ENCODE measurements at regions of chr17 and their contacts with region 1.

Region 1: GRCh38 chr17:46995841-46996571 is 17.0 kb upstream of the RPRML start:
- DNase-seq: no peak
- ATAC-seq: no peak

Region 2: GRCh38 chr17:46841561-46842379 is 154.2 kb before region 1 on chr17:
- intact Hi-C with region 1: loop called (anchors 1 kb)
- DNase-seq: no peak
- ATAC-seq: peak; percentile 46

Region 3: DNA sequence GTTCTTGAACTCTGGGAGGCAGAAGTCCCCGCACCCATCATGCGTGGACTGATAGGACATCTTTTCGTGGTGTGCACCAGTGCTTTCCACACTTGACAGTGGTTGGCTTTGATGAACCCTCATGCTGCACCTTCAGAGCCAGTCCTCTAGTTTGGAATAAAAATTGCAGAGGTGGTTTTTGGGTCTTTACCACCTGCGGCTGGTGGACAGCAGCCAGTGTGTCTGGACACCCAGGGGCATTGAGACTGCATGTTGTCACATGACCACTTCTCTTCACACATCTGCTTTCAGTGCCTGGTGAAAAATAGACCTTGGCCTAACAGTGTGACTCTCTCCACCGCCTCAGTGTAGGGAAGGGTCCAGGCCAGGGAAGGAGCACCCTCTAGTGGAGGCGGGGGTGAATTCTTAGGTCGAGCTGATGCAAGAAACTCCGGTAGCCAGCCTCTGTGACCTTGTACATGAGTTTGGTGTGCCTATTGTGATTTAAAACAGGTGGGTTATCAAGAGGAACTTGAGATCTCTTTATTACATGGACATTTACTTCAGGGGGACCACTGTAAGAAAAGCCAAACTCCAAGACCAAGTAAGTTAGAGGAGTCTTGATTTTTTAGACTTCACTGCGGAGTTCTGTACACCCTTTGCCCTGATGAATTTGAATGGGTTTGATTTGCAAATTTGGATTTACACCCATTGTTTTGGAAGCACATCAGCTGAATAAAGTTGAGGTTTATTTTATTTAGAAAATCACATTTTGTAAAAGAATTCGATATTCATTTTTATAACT is 55.2 kb before region 1 on chr17:
- intact Hi-C with region 1: loop called (anchors 1 kb)
- DNase-seq: peak; percentile 81
- ATAC-seq: peak; percentile 73